ENCODE measurements at regions of chr6 and their contacts with region 1.

Region 1: GRCh38 chr6:2988426-2989331 is 11.0 kb upstream of the NQO2 start:
- DNase-seq: peak; percentile 90
- ATAC-seq: peak; percentile 80
- H3K4me3 ChIP-seq: peak overlapping the region; percentile 79 to 93 (median 91)
- H3K4me3 Mint-ChIP-seq: peak overlapping the region; percentile 98
- H3K27ac ChIP-seq: peak overlapping the region; percentile 94 to 97
- H3K27ac Mint-ChIP-seq: peak overlapping the region; percentile 100
- H3K4me1 ChIP-seq: peaks cover 10 to 22% of the 10 kb centered on the region in 2 donors
- H3K4me1 Mint-ChIP-seq: peaks cover 25% of the 10 kb centered on the region
- H3K27me3 ChIP-seq: no peaks in the 10 kb centered on the region
- H3K27me3 Mint-ChIP-seq: peaks cover 2% of the 10 kb centered on the region
- CTCF ChIP-seq: peak; percentile 88

Region 2: GRCh38 chr6:2765166-2765895 is 223.3 kb before region 1 on chr6 and contains the start of gene WRNIP1:
- CTCF ChIA-PET with region 1: interaction called, 9 read pairs
- POLR2A ChIA-PET with region 1: interaction called, 11 read pairs
- intact Hi-C with region 1: loop called (anchors 1 kb)
- DNase-seq: peak; percentile 98
- ATAC-seq: peak; percentile 87
- H3K4me3 ChIP-seq: peak within 1 kb of the TSS; percentile 66 to 90 (median 77)
- H3K4me3 Mint-ChIP-seq: peak within 1 kb of the TSS; percentile 98
- H3K27ac ChIP-seq: peak within 1 kb of the TSS; percentile 96 to 97
- H3K27ac Mint-ChIP-seq: peak within 1 kb of the TSS; percentile 100
- H3K4me1 ChIP-seq: peaks cover 25 to 33% of the 10 kb centered on the region in 2 donors
- H3K4me1 Mint-ChIP-seq: peaks cover 43% of the 10 kb centered on the region
- H3K27me3 ChIP-seq: no peaks in the 10 kb centered on the region
- H3K27me3 Mint-ChIP-seq: no peaks in the 10 kb centered on the region
- CTCF ChIP-seq: peak; percentile 60
- total RNA-seq, gene WRNIP1: 32.1 and 35.2 TPM in 2 replicates

Region 3: GRCh38 chr6:2848851-2849250 is 139.8 kb before region 1 on chr6:
- CTCF ChIA-PET with region 1: interaction called, 103 read pairs
- POLR2A ChIA-PET with region 1: interaction called, 23 read pairs
- intact Hi-C with region 1: loop called (anchors 1 kb)
- DNase-seq: peak; percentile 80
- ATAC-seq: peak; percentile 69
- H3K4me3 ChIP-seq: no peak overlapping the region
- H3K4me3 Mint-ChIP-seq: peak overlapping the region; percentile 52
- H3K27ac ChIP-seq: peak overlapping the region; percentile 30 to 73
- H3K27ac Mint-ChIP-seq: peak overlapping the region; percentile 84
- H3K4me1 ChIP-seq: peaks cover 27 to 33% of the 10 kb centered on the region in 2 donors
- H3K4me1 Mint-ChIP-seq: peaks cover 43% of the 10 kb centered on the region
- H3K27me3 ChIP-seq: no peaks in the 10 kb centered on the region
- H3K27me3 Mint-ChIP-seq: no peaks in the 10 kb centered on the region
- CTCF ChIP-seq: no peak

Region 4: DNA sequence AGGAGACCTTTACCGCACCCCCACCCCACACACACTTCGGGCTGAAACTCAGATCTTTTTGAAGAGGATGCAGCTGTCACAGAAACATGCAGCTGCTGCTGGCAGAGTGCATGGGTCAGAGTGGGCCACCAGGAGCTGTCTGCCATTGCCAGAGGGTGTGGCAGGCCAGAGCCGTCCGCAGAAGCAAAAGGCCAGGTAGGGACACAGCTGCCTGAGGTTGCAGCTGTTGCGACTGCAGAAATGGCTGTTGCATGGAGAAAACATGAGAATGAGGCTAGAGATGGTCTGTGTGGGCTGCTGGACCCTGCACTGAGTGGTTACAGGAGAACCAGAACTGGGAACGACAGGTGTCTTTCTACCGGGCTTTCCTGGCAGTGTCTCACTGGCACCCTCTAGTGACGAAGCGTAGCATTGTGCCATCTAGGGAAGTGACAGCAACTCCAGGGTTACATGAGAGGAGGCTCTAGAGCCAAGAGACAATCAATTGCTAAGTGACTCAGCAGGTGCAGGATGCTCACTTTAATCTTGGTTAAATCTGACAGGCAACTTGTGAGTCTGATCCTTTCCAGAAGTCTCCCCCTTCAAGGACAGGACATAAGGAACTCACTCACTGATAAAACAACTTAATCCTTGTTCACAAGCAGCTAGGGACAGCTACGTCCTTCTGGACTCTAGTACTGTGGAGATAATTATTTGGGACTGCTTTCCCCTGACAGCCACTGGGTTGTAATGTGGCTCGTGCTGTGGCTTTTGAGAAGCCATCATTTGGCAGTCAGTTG is 56.5 kb before region 1 on chr6:
- CTCF ChIA-PET with region 1: interaction called, 81 read pairs
- POLR2A ChIA-PET with region 1: interaction called, 3 read pairs
- intact Hi-C with region 1: loop called (anchors 1 kb)
- DNase-seq: peak; percentile 90
- ATAC-seq: peak; percentile 98
- H3K4me3 ChIP-seq: peak overlapping the region in 1 of 5 experiments; percentile 23
- H3K4me3 Mint-ChIP-seq: peak overlapping the region; percentile 69
- H3K27ac ChIP-seq: no peak overlapping the region
- H3K27ac Mint-ChIP-seq: peak overlapping the region; percentile 57
- H3K4me1 ChIP-seq: peaks cover 13 to 17% of the 10 kb centered on the region in 2 donors
- H3K4me1 Mint-ChIP-seq: peaks cover 20% of the 10 kb centered on the region
- H3K27me3 ChIP-seq: no peaks in the 10 kb centered on the region
- H3K27me3 Mint-ChIP-seq: no peaks in the 10 kb centered on the region
- CTCF ChIP-seq: peak; percentile 98

Region 5: GRCh38 chr6:2971420-2972218 is 17.1 kb before region 1 on chr6 and contains the start of gene SERPINB6:
- CTCF ChIA-PET with region 1: interaction called, 8 read pairs
- POLR2A ChIA-PET with region 1: interaction called, 12 read pairs
- intact Hi-C with region 1: loop called (anchors 1 kb)
- DNase-seq: peak; percentile 65
- ATAC-seq: peak; percentile 64
- H3K4me3 ChIP-seq: peak within 1 kb of the TSS; percentile 56 to 86 (median 68)
- H3K4me3 Mint-ChIP-seq: peak within 1 kb of the TSS; percentile 91
- H3K27ac ChIP-seq: peak within 1 kb of the TSS; percentile 39 to 74
- H3K27ac Mint-ChIP-seq: peak within 1 kb of the TSS; percentile 93
- H3K4me1 ChIP-seq: peaks cover 13 to 17% of the 10 kb centered on the region in 2 donors
- H3K4me1 Mint-ChIP-seq: peaks cover 43% of the 10 kb centered on the region
- H3K27me3 ChIP-seq: peaks cover 0 to 4% (median 0%) of the 10 kb centered on the region in 4 experiments
- H3K27me3 Mint-ChIP-seq: peaks cover 3% of the 10 kb centered on the region
- CTCF ChIP-seq: no peak
- total RNA-seq, gene SERPINB6: 58.5 and 58.9 TPM in 2 replicates

Region 6: DNA sequence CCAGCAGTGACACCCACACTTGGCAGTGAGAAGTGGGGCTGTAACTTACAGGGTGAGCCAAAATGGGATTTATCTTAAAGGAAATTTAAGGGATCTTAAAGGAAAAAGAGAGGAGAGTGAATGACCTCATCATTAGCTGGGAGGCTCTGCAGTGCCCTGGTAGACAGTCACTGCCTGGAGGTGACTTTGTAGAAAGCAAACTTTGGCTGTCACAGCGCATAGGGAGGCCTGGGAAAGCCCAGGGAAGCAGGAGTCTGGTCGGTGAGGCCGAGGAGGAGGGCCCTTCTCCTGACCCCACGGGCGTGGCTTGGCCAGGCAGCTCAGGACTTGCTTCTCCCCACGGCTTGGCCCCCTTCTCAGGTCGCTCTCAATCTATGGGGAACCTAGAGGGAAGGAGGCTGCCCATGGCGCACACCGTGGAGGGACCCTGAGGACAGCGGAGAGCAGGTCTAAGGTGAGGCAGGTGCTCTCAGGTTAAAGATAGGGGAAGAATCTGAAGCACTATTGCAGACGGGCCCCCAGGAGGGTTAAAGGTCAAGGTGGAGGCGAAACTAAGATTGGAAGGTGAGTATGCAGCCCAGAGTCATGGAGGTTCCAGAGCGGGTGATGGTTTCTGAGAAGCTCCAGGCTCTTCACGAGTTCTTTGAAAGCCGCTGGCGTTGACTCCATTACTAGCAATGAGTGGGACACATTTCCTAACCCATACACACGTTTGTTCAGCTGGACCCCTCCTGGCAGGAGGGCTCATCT is 64.0 kb after region 1 on chr6:
- CTCF ChIA-PET with region 1: interaction called, 40 read pairs
- POLR2A ChIA-PET with region 1: interaction called, 6 read pairs
- intact Hi-C with region 1: no loop called
- DNase-seq: no peak
- ATAC-seq: no peak
- H3K4me3 ChIP-seq: no peak overlapping the region
- H3K4me3 Mint-ChIP-seq: peak overlapping the region; percentile 76
- H3K27ac ChIP-seq: no peak overlapping the region
- H3K27ac Mint-ChIP-seq: peak overlapping the region; percentile 72
- H3K4me1 ChIP-seq: peaks cover 5 to 22% of the 10 kb centered on the region in 2 donors
- H3K4me1 Mint-ChIP-seq: peaks cover 13% of the 10 kb centered on the region
- H3K27me3 ChIP-seq: peaks cover 0 to 12% (median 3%) of the 10 kb centered on the region in 4 experiments
- H3K27me3 Mint-ChIP-seq: peaks cover 17% of the 10 kb centered on the region
- CTCF ChIP-seq: no peak

Region 7: GRCh38 chr6:3251462-3252314 is 263.0 kb after region 1 on chr6:
- CTCF ChIA-PET with region 1: interaction called, 10 read pairs
- POLR2A ChIA-PET with region 1: no interaction called
- intact Hi-C with region 1: no loop called
- DNase-seq: peak; percentile 82
- ATAC-seq: peak; percentile 100
- H3K4me3 ChIP-seq: peak overlapping the region in 2 of 5 experiments; percentile 5 to 25
- H3K4me3 Mint-ChIP-seq: peak overlapping the region; percentile 7
- H3K27ac ChIP-seq: no peak overlapping the region
- H3K27ac Mint-ChIP-seq: no peak overlapping the region
- H3K4me1 ChIP-seq: peaks cover 7 to 8% of the 10 kb centered on the region in 2 donors
- H3K4me1 Mint-ChIP-seq: peaks cover 4% of the 10 kb centered on the region
- H3K27me3 ChIP-seq: peaks cover 0 to 32% (median 14%) of the 10 kb centered on the region in 4 experiments
- H3K27me3 Mint-ChIP-seq: peaks cover 32% of the 10 kb centered on the region
- CTCF ChIP-seq: peak; percentile 99

Measured in B cell (primary cell).